ENCODE measurements at regions of chr15 and their contacts with region 1.

Region 1: DNA sequence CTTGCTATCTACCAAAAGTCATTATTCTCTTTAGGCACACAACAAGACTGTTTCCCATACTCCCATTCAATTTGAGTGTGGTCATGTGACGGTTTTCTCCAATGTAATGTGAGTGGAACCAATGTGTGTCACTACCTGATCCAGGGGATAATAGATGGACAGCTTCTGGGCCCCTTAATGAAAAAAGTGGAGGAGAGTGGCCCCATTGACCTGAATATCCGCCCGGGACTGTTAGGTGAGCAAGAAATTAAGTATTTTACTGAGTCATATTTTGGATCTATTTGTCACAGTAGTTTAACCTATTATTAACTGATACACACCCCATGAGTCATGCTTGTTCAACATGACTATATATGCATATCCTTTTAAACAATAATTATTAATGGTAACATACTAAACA is 15.1 kb upstream of the ARID3B start:
- DNase-seq: no peak
- H3K4me3 ChIP-seq: no peak overlapping the region
- CTCF ChIP-seq: no peak
- POLR2A ChIP-seq: no peak

Region 2: DNA sequence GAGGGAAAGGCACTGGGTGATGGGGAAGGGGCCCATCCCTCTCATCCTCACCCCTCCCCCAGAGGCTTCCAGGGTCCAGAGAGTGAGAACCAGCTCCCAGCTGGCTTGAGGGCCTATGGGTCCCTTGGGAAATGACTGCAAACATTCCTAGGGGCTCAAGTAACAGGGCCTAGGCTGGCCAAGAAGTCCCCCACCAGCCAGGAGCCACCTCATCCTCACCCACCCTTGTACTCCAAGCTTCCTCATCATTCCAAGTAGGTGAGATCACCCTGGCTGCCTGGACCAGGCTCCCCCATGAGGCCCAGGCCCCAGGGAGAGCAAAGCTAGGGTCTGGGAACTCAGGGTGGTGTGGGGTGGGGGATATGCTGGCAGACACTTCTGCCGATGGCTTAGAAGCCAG is 584.9 kb before region 1 on chr15:
- intact Hi-C with region 1: loop called (anchors 10 kb)
- DNase-seq: no peak
- H3K4me3 ChIP-seq: no peak overlapping the region
- CTCF ChIP-seq: no peak
- POLR2A ChIP-seq: no peak

Region 3: GRCh38 chr15:74614744-74615507 is 89.0 kb after region 1 on chr15:
- intact Hi-C with region 1: no loop called
- DNase-seq: peak; percentile 69 to 96
- H3K4me3 ChIP-seq: peak overlapping the region; percentile 96
- CTCF ChIP-seq: no peak
- POLR2A ChIP-seq: no peak

Measured in lower leg skin (tissue), 4 donors.